CD4-positive, alpha-beta T cell (primary cell): ENCODE measurements at regions of chr15 and their contacts with region 1.

Region 1: DNA sequence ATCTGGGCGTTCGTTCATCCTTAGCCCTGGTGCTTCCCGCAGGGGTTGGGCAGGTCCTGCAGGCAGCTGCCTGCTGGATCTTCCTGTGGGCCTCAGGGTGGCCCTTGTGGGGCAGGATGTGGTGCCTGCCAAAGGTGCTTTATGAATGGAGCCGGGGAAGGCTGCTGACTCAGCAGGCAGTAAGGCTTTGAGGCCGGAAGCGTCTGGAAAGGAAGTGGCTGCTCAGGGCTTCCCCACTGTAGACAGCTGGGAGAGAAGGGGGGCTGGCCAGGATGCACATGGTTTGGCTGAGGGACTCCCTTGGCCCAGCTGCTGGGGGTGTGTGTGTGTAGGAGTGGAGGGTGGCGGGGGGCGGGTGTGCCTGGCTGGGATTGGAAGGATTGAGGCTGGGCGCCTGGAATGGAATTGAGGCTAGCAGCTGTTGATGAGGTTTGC is 12.9 kb downstream of the CD276 start:
- DNase-seq: peak; percentile 47 to 90 (median 70)
- ATAC-seq: peak; percentile 92
- H3K4me3 ChIP-seq: no peak overlapping the region
- H3K4me3 Mint-ChIP-seq: peak overlapping the region; percentile 34
- H3K27ac ChIP-seq: no peak overlapping the region
- H3K27ac Mint-ChIP-seq: peak overlapping the region; percentile 10
- H3K4me1 ChIP-seq: peaks cover 26% of the 10 kb centered on the region
- H3K4me1 Mint-ChIP-seq: peaks cover 26% of the 10 kb centered on the region
- H3K27me3 ChIP-seq: peaks cover 12 to 41% of the 10 kb centered on the region in 2 experiments
- H3K27me3 Mint-ChIP-seq: peaks cover 65% of the 10 kb centered on the region
- CTCF ChIP-seq: no peak

Region 2: GRCh38 chr15:72796515-72797337 is 900.3 kb before region 1 on chr15:
- CTCF ChIA-PET with region 1: no interaction called
- POLR2A ChIA-PET with region 1: no interaction called
- intact Hi-C with region 1: loop called in 1 of 2 experiments (anchors 5 kb)
- DNase-seq: peak in 12 of 14 experiments; percentile 17 to 74 (median 38)
- ATAC-seq: peak; percentile 81
- H3K4me3 ChIP-seq: peak overlapping the region; percentile 66
- H3K4me3 Mint-ChIP-seq: peak overlapping the region; percentile 89
- H3K27ac ChIP-seq: no peak overlapping the region
- H3K27ac Mint-ChIP-seq: no peak overlapping the region
- H3K4me1 ChIP-seq: peaks cover 11% of the 10 kb centered on the region
- H3K4me1 Mint-ChIP-seq: peaks cover 10% of the 10 kb centered on the region
- H3K27me3 ChIP-seq: peaks cover 6 to 8% of the 10 kb centered on the region in 2 experiments
- H3K27me3 Mint-ChIP-seq: peaks cover 49% of the 10 kb centered on the region
- CTCF ChIP-seq: peak; percentile 27

Region 3: GRCh38 chr15:73240866-73241499 is 456.1 kb before region 1 on chr15:
- CTCF ChIA-PET with region 1: interaction called, 3 read pairs
- POLR2A ChIA-PET with region 1: no interaction called
- intact Hi-C with region 1: loop called in 1 of 2 experiments (anchors 1 kb)
- DNase-seq: peak; percentile 41 to 80 (median 66)
- ATAC-seq: peak; percentile 57
- H3K4me3 ChIP-seq: no peak overlapping the region
- H3K4me3 Mint-ChIP-seq: no peak overlapping the region
- H3K27ac ChIP-seq: no peak overlapping the region
- H3K27ac Mint-ChIP-seq: no peak overlapping the region
- H3K4me1 ChIP-seq: no peaks in the 10 kb centered on the region
- H3K4me1 Mint-ChIP-seq: no peaks in the 10 kb centered on the region
- H3K27me3 ChIP-seq: no peaks in the 10 kb centered on the region
- H3K27me3 Mint-ChIP-seq: no peaks in the 10 kb centered on the region
- CTCF ChIP-seq: peak; percentile 90

Region 4: GRCh38 chr15:73368301-73369136 is 328.5 kb before region 1 on chr15 and contains the start of gene HCN4:
- CTCF ChIA-PET with region 1: no interaction called
- POLR2A ChIA-PET with region 1: no interaction called
- intact Hi-C with region 1: no loop called
- DNase-seq: no peak
- ATAC-seq: no peak
- H3K4me3 ChIP-seq: no peak within 1 kb of the TSS
- H3K4me3 Mint-ChIP-seq: no peak within 1 kb of the TSS
- H3K27ac ChIP-seq: no peak within 1 kb of the TSS
- H3K27ac Mint-ChIP-seq: no peak within 1 kb of the TSS
- H3K4me1 ChIP-seq: no peaks in the 10 kb centered on the region
- H3K4me1 Mint-ChIP-seq: no peaks in the 10 kb centered on the region
- H3K27me3 ChIP-seq: peaks cover 40 to 55% of the 10 kb centered on the region in 2 experiments
- H3K27me3 Mint-ChIP-seq: peaks cover 59% of the 10 kb centered on the region
- CTCF ChIP-seq: no peak
- total RNA-seq, gene HCN4: not detected

Region 5: GRCh38 chr15:73560501-73561117 is 136.4 kb before region 1 on chr15:
- CTCF ChIA-PET with region 1: interaction called, 13 read pairs
- POLR2A ChIA-PET with region 1: interaction called, 6 read pairs
- intact Hi-C with region 1: loop called (anchors 1 to 5 kb)
- DNase-seq: peak in 4 of 14 experiments; percentile 9 to 66 (median 64)
- ATAC-seq: peak; percentile 55
- H3K4me3 ChIP-seq: no peak overlapping the region
- H3K4me3 Mint-ChIP-seq: no peak overlapping the region
- H3K27ac ChIP-seq: no peak overlapping the region
- H3K27ac Mint-ChIP-seq: no peak overlapping the region
- H3K4me1 ChIP-seq: no peaks in the 10 kb centered on the region
- H3K4me1 Mint-ChIP-seq: peaks cover 5% of the 10 kb centered on the region
- H3K27me3 ChIP-seq: no peaks in the 10 kb centered on the region
- H3K27me3 Mint-ChIP-seq: no peaks in the 10 kb centered on the region
- CTCF ChIP-seq: peak; percentile 73

Region 6: DNA sequence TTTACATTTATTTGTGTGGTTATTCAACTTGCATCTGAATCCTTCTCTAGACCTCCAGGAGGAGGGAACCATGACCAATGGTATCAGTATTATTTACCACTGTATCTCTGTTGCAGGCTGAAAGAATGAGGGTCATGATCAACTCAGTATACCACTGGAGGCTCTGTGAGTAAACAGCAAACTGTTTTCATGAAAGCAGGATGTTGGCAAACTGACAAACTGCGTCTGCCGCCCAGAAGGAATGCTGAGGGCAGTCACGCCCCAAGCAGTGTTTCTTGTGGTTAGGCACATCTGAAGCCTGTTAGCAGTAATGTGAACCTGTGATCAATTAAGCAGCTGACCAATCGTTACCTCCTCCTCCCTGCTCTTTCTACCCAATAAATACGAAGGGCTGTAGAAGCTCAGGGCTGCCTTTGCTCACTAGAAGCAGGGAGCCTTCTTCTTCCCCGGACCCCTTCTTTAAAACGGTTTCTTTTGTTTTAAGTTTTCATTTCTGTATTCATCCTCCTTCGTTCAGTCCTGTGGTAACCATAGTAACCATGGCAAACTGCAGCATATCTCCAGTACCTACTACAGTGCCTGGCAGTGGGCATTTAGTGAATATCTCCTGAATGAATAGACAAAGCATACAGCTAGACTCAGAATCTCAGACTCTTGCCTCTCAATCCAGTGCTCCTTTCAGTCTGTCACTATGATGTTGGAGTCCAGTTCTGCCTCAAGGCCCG is 57.4 kb before region 1 on chr15:
- CTCF ChIA-PET with region 1: interaction called, 19 read pairs
- POLR2A ChIA-PET with region 1: no interaction called
- intact Hi-C with region 1: loop called (anchors 1 kb)
- DNase-seq: no peak
- ATAC-seq: no peak
- H3K4me3 ChIP-seq: no peak overlapping the region
- H3K4me3 Mint-ChIP-seq: no peak overlapping the region
- H3K27ac ChIP-seq: no peak overlapping the region
- H3K27ac Mint-ChIP-seq: no peak overlapping the region
- H3K4me1 ChIP-seq: peaks cover 7% of the 10 kb centered on the region
- H3K4me1 Mint-ChIP-seq: peaks cover 6% of the 10 kb centered on the region
- H3K27me3 ChIP-seq: no peaks in the 10 kb centered on the region
- H3K27me3 Mint-ChIP-seq: peaks cover 33% of the 10 kb centered on the region
- CTCF ChIP-seq: no peak

Region 7: GRCh38 chr15:73677146-73677607 is 19.9 kb before region 1 on chr15:
- CTCF ChIA-PET with region 1: interaction called, 67 read pairs
- POLR2A ChIA-PET with region 1: interaction called, 6 read pairs
- intact Hi-C with region 1: loop called (anchors 1 kb)
- DNase-seq: peak; percentile 23 to 76 (median 43)
- ATAC-seq: peak; percentile 41
- H3K4me3 ChIP-seq: no peak overlapping the region
- H3K4me3 Mint-ChIP-seq: no peak overlapping the region
- H3K27ac ChIP-seq: no peak overlapping the region
- H3K27ac Mint-ChIP-seq: no peak overlapping the region
- H3K4me1 ChIP-seq: no peaks in the 10 kb centered on the region
- H3K4me1 Mint-ChIP-seq: no peaks in the 10 kb centered on the region
- H3K27me3 ChIP-seq: peaks cover 12 to 26% of the 10 kb centered on the region in 2 experiments
- H3K27me3 Mint-ChIP-seq: peaks cover 41% of the 10 kb centered on the region
- CTCF ChIP-seq: peak; percentile 86